WTC11 (cell line): ENCODE measurements at regions of chr7 and their contacts with region 1.

Region 1: GRCh38 chr7:34900891-34901513 is 136.3 kb downstream of the DPY19L1 start:
- DNase-seq: peak; percentile 27
- ATAC-seq: peak; percentile 93
- H3K4me3 Mint-ChIP-seq: no peak overlapping the region
- H3K27ac Mint-ChIP-seq: no peak overlapping the region
- H3K4me1 Mint-ChIP-seq: peaks cover 42% of the 10 kb centered on the region
- H3K27me3 Mint-ChIP-seq: peaks cover 16% of the 10 kb centered on the region
- CTCF ChIP-seq: peak; percentile 54; the same call in 1 of the 2 replicates

Region 2: DNA sequence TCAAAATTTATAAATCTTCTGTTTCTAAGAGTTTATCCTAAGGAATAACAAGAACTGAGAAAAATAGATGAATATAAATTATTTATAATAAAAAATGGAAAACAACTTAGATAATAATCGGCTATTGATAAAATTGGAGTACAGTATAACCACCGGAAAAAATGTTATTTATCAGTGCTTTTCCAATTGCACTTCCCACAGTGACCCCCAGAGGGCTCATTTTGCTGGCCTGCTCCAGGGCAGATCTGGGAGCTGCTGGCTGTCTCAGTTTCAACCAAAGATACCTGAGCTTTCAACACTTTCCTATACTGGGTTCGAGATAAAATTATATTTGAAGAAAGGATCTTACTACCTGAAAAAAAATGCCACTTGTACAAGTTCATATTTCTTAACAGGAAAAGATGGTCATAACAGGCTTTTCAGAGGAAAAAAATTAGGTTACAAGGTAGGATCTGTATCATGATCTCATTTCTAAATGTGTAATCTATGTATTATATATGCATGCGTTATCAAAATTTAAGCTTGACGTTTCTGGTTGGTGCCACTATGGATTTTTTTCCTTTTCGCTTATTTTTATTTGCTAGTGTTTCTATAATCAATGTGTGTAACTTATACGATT is 77.3 kb before region 1 on chr7:
- CTCF ChIA-PET with region 1: interaction called, 14 read pairs
- POLR2A ChIA-PET with region 1: no interaction called
- DNase-seq: peak; percentile 71
- ATAC-seq: peak; percentile 80
- H3K4me3 Mint-ChIP-seq: no peak overlapping the region
- H3K27ac Mint-ChIP-seq: no peak overlapping the region
- H3K4me1 Mint-ChIP-seq: peaks cover 2% of the 10 kb centered on the region; the same call in 1 of the 2 replicates
- H3K27me3 Mint-ChIP-seq: no peaks in the 10 kb centered on the region
- CTCF ChIP-seq: peak; percentile 88

Region 3: GRCh38 chr7:35036361-35037171 is 135.6 kb after region 1 on chr7:
- CTCF ChIA-PET with region 1: interaction called, 11 read pairs
- POLR2A ChIA-PET with region 1: no interaction called
- DNase-seq: peak; percentile 63
- ATAC-seq: peak; percentile 17
- H3K4me3 Mint-ChIP-seq: peak overlapping the region; percentile 96
- H3K27ac Mint-ChIP-seq: peak overlapping the region; percentile 80
- H3K4me1 Mint-ChIP-seq: peaks cover 41% of the 10 kb centered on the region
- H3K27me3 Mint-ChIP-seq: no peaks in the 10 kb centered on the region
- CTCF ChIP-seq: no peak